ENCODE measurements at regions of chr2 and their contacts with region 1.

Region 1: DNA sequence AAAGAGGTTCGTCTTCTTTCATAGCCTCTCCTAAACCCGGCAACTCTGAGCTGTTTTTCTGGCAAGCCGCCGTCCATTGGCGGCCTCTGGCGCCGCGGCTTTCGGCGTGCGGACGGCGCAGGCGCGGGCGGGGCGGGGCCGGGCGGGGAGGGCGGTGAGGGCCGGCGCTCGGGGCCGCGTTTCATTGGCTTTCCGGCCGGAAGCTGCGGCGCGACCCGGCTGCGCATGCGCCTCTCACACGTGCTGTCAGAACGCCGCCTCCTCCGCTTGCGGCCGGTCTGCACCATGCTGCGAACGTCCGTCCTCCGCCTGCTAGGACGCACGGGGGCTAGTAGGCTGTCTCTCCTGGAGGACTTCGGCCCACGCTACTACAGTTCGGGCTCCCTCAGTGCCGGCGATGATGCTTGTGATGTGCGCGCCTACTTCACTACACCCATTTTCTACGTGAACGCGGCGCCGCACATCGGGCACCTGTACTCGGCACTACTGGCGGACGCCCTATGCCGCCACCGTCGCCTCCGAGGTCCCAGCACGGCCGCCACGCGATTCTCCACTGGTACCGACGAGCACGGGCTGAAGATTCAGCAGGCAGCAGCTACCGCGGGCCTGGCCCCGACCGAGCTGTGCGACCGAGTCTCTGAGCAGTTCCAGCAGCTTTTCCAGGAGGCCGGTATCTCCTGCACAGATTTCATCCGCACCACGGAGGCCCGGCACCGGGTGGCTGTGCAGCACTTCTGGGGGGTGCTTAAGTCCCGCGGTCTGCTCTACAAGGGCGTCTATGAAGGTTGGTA is at the start of gene MARS2:
- DNase-seq: peak; percentile 89
- ATAC-seq: peak; percentile 92
- H3K4me3 Mint-ChIP-seq: peak within 1 kb of the TSS; percentile 89
- H3K27ac Mint-ChIP-seq: peak within 1 kb of the TSS; percentile 89
- H3K4me1 Mint-ChIP-seq: peaks cover 41% of the 10 kb centered on the region
- H3K27me3 Mint-ChIP-seq: peaks cover 14% of the 10 kb centered on the region
- CTCF ChIP-seq: no peak
- total RNA-seq, gene MARS2: 14.6 and 15.4 TPM in 2 replicates

Region 2: DNA sequence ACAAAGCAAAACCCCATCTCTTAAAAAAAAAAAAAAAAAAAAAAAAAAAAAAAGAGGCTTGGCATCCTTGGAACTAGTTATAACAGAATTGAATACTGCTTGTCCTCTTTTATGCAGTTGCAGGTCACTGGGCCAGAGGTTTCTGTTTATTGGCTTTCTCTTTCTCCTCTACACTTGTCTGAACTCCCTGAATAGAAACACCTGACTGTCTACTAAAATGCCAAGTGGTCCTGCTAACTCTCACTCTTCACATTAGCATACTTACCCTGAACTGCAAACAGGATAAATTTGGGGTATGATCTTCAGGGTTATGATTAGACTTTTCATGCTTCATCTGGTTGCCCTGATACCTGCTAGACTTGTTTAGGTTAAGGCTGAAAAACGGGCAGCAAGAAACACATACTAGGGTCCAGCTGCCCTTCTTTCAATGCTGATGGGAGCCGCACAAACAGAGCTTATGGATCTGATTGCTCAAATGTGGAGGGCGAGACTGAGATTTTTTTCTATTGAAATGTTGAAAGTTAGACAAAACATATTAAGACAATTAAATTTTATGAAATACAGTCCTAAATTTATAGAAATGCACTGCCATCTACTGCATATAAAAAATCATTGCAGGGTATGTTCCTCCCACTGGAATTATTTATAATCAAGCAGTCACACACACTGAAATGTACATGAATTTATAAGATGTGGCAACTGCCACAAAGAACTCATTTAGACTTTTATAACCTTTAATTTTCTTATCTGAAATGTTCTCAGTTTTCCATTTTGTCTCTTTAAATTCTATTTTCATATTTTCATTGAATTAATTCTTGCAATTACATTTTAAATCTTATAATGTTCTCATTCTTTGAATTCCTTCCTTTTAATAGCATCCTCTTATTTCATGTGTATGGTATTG is 946.6 kb before region 1 on chr2:
- CTCF ChIA-PET with region 1: no interaction called
- POLR2A ChIA-PET with region 1: no interaction called
- intact Hi-C with region 1: no loop called
- DNase-seq: no peak
- ATAC-seq: no peak
- H3K4me3 Mint-ChIP-seq: no peak overlapping the region
- H3K27ac Mint-ChIP-seq: no peak overlapping the region
- H3K4me1 Mint-ChIP-seq: no peaks in the 10 kb centered on the region
- H3K27me3 Mint-ChIP-seq: no peaks in the 10 kb centered on the region
- CTCF ChIP-seq: no peak

Region 3: DNA sequence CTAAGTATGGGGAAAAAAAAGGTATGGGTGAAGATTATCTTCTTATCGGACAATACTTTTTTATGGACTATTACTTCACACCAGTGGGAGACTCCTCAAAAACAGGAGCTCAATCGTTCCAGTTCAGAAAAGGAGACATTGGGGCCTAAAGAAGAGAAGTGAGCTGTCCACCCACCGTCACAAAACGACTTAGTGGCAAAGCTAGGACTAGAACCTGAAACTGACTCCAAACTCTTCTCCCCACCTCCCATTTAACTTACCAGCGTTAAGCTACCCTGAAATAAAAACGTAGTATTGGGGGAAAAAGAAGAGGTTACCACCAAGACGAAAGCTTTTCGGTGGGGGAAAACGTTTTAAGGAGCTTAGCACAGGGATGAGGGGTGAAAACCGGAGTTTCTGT is 906.3 kb before region 1 on chr2:
- CTCF ChIA-PET with region 1: no interaction called
- POLR2A ChIA-PET with region 1: interaction called, 5 read pairs
- intact Hi-C with region 1: loop called (anchors 10 kb)
- DNase-seq: no peak
- ATAC-seq: no peak
- H3K4me3 Mint-ChIP-seq: peak overlapping the region; percentile 97
- H3K27ac Mint-ChIP-seq: peak overlapping the region; percentile 92
- H3K4me1 Mint-ChIP-seq: peaks cover 18% of the 10 kb centered on the region
- H3K27me3 Mint-ChIP-seq: peaks cover 7% of the 10 kb centered on the region
- CTCF ChIP-seq: no peak

Region 4: GRCh38 chr2:197434541-197435513 is 270.5 kb before region 1 on chr2 and contains the start of gene SF3B1:
- CTCF ChIA-PET with region 1: no interaction called
- POLR2A ChIA-PET with region 1: interaction called, 5 read pairs
- intact Hi-C with region 1: loop called (anchors 2 kb)
- DNase-seq: peak; percentile 98
- ATAC-seq: peak; percentile 96
- H3K4me3 Mint-ChIP-seq: peak within 1 kb of the TSS; percentile 99
- H3K27ac Mint-ChIP-seq: peak within 1 kb of the TSS; percentile 100
- H3K4me1 Mint-ChIP-seq: peaks cover 62% of the 10 kb centered on the region
- H3K27me3 Mint-ChIP-seq: no peaks in the 10 kb centered on the region
- CTCF ChIP-seq: no peak
- total RNA-seq, gene SF3B1: 328 and 380 TPM in 2 replicates

Region 5: DNA sequence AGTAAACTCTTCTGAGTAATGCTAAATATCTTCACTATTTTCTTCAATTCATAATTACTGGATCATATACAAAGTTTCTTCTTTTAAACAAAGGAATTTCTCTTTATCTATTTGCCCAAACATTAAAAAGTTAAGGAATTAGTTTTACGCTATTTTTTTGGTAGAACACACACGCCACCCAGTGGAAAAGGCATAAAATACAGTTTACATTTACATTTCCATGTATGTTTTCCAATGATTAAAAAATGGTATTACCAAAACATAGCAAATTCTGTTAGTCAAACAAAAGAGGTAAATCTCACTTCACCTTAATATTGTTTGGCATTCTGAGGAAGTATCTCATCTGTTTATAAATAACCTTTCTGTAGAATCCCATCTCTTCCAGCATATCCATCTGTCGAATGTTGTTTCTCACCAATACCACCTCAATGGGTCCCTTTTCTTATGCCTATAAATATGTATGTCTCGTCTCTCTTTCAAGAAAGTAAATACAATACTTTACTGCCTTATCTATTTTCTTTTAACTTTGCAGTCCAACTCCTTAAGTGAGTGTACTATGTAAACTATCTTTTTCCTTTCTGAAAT is 72.6 kb after region 1 on chr2:
- CTCF ChIA-PET with region 1: interaction called, 7 read pairs
- POLR2A ChIA-PET with region 1: no interaction called
- intact Hi-C with region 1: loop called (anchors 1 kb)
- DNase-seq: no peak
- ATAC-seq: no peak
- H3K4me3 Mint-ChIP-seq: no peak overlapping the region
- H3K27ac Mint-ChIP-seq: no peak overlapping the region
- H3K4me1 Mint-ChIP-seq: no peaks in the 10 kb centered on the region
- H3K27me3 Mint-ChIP-seq: peaks cover 7% of the 10 kb centered on the region
- CTCF ChIP-seq: peak; percentile 23

Region 6: DNA sequence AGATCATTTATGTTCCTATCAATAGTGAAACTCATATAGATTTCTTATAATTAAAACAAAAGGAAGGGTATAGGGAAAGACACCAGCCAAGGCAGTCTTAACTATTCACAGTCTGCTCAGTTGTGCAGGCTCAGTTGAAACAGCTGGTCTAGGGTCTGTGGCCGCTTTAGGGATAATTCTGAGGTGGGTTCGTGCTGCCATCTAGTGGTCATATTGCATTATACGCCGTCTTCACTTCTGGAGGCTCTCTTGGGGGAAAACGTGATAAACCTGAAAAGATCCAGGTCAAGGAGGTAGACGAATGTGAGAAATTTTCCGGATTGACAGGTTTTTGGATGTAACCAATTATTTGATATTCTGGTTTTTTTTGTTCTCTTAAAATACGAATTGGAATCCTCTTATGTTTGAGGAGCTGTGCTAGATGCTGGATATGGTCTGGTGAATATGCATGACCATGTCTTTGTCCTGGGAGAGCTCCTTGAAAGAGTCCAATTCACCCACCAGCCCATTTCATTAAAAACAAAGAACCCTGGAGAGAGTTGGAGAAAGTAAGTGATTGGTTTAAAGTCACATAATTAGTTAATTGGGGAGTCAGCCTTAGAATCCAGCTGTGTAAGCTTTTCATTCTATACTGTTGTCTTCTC is 591.5 kb after region 1 on chr2:
- CTCF ChIA-PET with region 1: interaction called, 14 read pairs
- POLR2A ChIA-PET with region 1: no interaction called
- intact Hi-C with region 1: loop called (anchors 1 kb)
- DNase-seq: no peak
- ATAC-seq: peak; percentile 64
- H3K4me3 Mint-ChIP-seq: no peak overlapping the region
- H3K27ac Mint-ChIP-seq: no peak overlapping the region
- H3K4me1 Mint-ChIP-seq: peaks cover 4% of the 10 kb centered on the region
- H3K27me3 Mint-ChIP-seq: peaks cover 2% of the 10 kb centered on the region
- CTCF ChIP-seq: peak; percentile 83

Region 7: DNA sequence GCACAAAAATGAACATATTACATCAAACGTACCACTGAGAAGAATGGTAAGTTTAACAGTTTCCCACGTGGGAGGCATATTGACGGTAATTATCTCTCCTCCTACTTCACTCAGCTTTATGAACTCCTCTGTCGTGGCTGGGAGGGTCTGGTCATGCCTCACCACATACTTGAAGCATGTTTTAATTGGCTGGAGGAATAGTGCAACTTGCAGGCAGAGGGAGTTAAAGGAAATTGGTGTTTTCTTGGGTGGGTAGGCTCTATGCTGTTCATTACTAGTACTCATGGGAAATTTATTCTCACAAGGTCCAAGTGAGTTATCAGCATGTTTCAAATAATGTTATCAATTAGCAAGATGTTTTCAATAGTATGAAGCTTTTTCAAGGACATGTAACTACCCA is 866.1 kb after region 1 on chr2:
- CTCF ChIA-PET with region 1: no interaction called
- POLR2A ChIA-PET with region 1: no interaction called
- intact Hi-C with region 1: no loop called
- DNase-seq: no peak
- ATAC-seq: no peak
- H3K4me3 Mint-ChIP-seq: no peak overlapping the region
- H3K27ac Mint-ChIP-seq: no peak overlapping the region
- H3K4me1 Mint-ChIP-seq: no peaks in the 10 kb centered on the region
- H3K27me3 Mint-ChIP-seq: no peaks in the 10 kb centered on the region
- CTCF ChIP-seq: no peak